ENCODE measurements at regions of chr21 and their contacts with region 1.

Region 1: GRCh38 chr21:41726945-41727783 is 39.7 kb downstream of the RIPK4 start:
- DNase-seq: peak; percentile 49 to 66
- H3K4me3 ChIP-seq: no peak overlapping the region
- H3K4me3 Mint-ChIP-seq: no peak overlapping the region
- H3K27ac Mint-ChIP-seq: peak overlapping the region; percentile 3
- H3K4me1 ChIP-seq: peaks cover 39% of the 10 kb centered on the region
- H3K4me1 Mint-ChIP-seq: peaks cover 25% of the 10 kb centered on the region
- H3K27me3 ChIP-seq: no peaks in the 10 kb centered on the region
- H3K27me3 Mint-ChIP-seq: no peaks in the 10 kb centered on the region
- CTCF ChIP-seq: peak in 1 of 2 experiments; percentile 25

Region 2: GRCh38 chr21:41777951-41778874 is 51.0 kb after region 1 on chr21:
- CTCF ChIA-PET with region 1: no interaction called
- POLR2A ChIA-PET with region 1: no interaction called
- intact Hi-C with region 1: loop called (anchors 1 kb)
- DNase-seq: peak; percentile 90 to 92
- H3K4me3 ChIP-seq: no peak overlapping the region
- H3K4me3 Mint-ChIP-seq: peak overlapping the region; percentile 35
- H3K27ac Mint-ChIP-seq: no peak overlapping the region
- H3K4me1 ChIP-seq: peaks cover 19% of the 10 kb centered on the region
- H3K4me1 Mint-ChIP-seq: peaks cover 26% of the 10 kb centered on the region
- H3K27me3 ChIP-seq: no peaks in the 10 kb centered on the region
- H3K27me3 Mint-ChIP-seq: no peaks in the 10 kb centered on the region
- CTCF ChIP-seq: peak; percentile 88 to 89

Measured in Caco-2 (cell line).